ENCODE measurements at regions of chr6 and their contacts with region 1.

Region 1: GRCh38 chr6:73129653-73130443 is 95.4 kb downstream of the KHDC1L start:
- DNase-seq: peak; percentile 76
- H3K4me3 ChIP-seq: no peak overlapping the region
- H3K27ac ChIP-seq: no peak overlapping the region
- H3K4me1 ChIP-seq: no peaks in the 10 kb centered on the region
- H3K27me3 ChIP-seq: no peaks in the 10 kb centered on the region
- CTCF ChIP-seq: peak; percentile 61 to 95 (median 82)
- EP300 ChIP-seq: no peak
- POLR2A ChIP-seq: no peak

Region 2: GRCh38 chr6:72321788-72322187 is 808.1 kb before region 1 on chr6:
- intact Hi-C with region 1: loop called (anchors 10 kb)
- DNase-seq: no peak
- H3K4me3 ChIP-seq: no peak overlapping the region
- H3K27ac ChIP-seq: no peak overlapping the region
- H3K4me1 ChIP-seq: no peaks in the 10 kb centered on the region
- H3K27me3 ChIP-seq: no peaks in the 10 kb centered on the region
- CTCF ChIP-seq: no peak
- EP300 ChIP-seq: no peak
- POLR2A ChIP-seq: no peak

Region 3: GRCh38 chr6:72411872-72412708 is 717.8 kb before region 1 on chr6:
- intact Hi-C with region 1: loop called (anchors 2 kb)
- DNase-seq: peak; percentile 85
- H3K4me3 ChIP-seq: no peak overlapping the region
- H3K27ac ChIP-seq: no peak overlapping the region
- H3K4me1 ChIP-seq: no peaks in the 10 kb centered on the region
- H3K27me3 ChIP-seq: no peaks in the 10 kb centered on the region
- CTCF ChIP-seq: peak; percentile 96 to 100 (median 100)
- EP300 ChIP-seq: no peak
- POLR2A ChIP-seq: no peak

Region 4: GRCh38 chr6:72622094-72622940 is 507.5 kb before region 1 on chr6:
- intact Hi-C with region 1: loop called (anchors 5 kb)
- DNase-seq: no peak
- H3K4me3 ChIP-seq: peak overlapping the region; percentile 11 to 54 (median 50)
- H3K27ac ChIP-seq: no peak overlapping the region
- H3K4me1 ChIP-seq: peaks cover 0 to 39% (median 36%) of the 10 kb centered on the region in 4 donors
- H3K27me3 ChIP-seq: peaks cover 13 to 50% (median 39%) of the 10 kb centered on the region in 3 donors
- CTCF ChIP-seq: peak in 1 of 4 experiments; percentile 10
- EP300 ChIP-seq: no peak
- POLR2A ChIP-seq: no peak